Activated T-helper 1 cell treated with anti-CD3 and anti-CD28 coated beads, Interleukin-12 subunit alpha, Interleukin-12 subunit beta, Interleukin-2, Interleukin-4 antibody, amounts not matched to agents 30 ng/mL and 10 ng/mL and 1 ng/mL, durations not matched to agents 14 hours and 24 hours and 36 hours (primary cell): ENCODE measurements at regions of chr20 and their contacts with region 1.

Region 1: DNA sequence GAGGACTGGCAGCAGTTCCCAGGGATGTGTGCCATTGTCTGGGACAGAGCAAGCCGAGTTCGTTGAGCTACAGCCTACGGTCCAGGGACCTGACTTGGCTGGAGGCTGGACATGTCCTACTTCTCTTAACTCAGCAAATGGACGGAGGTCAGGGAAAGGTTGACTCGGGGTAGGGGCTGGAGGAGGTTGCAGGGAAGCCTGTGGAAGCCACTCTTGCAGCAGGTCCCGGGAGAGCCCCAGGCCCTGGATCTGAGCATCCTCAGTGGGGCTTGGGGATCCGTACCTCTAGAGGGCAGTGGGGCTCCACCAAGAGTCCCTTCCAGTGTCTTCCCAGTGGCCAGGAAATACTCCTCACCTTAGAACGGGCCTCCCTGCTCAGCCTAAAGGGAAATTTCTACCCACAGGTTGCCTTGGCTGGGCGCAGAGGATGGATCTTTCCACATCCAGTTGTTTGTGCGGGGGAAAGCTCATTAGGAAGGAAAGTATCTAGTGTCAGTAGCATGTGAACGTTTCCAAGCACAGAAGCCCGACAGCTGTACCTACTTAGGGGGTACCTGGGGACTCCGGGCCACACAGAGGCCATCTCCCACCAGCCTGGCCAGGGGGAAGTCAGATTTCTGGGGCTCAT is 170.2 kb downstream of the NFATC2 start:
- DNase-seq: peak; percentile 22
- H3K4me3 Mint-ChIP-seq: no peak overlapping the region
- H3K27ac Mint-ChIP-seq: no peak overlapping the region
- H3K4me1 Mint-ChIP-seq: peaks cover 17% of the 10 kb centered on the region
- H3K27me3 Mint-ChIP-seq: peaks cover 5% of the 10 kb centered on the region

Region 2: GRCh38 chr20:51624157-51624731 is 252.0 kb after region 1 on chr20:
- intact Hi-C with region 1: loop called (anchors 1 kb)
- DNase-seq: peak; percentile 31
- H3K4me3 Mint-ChIP-seq: no peak overlapping the region
- H3K27ac Mint-ChIP-seq: no peak overlapping the region
- H3K4me1 Mint-ChIP-seq: peaks cover 19% of the 10 kb centered on the region
- H3K27me3 Mint-ChIP-seq: peaks cover 2% of the 10 kb centered on the region